SK-N-SH (cell line): ENCODE measurements at regions of chr5 and their contacts with region 1.

Region 1: DNA sequence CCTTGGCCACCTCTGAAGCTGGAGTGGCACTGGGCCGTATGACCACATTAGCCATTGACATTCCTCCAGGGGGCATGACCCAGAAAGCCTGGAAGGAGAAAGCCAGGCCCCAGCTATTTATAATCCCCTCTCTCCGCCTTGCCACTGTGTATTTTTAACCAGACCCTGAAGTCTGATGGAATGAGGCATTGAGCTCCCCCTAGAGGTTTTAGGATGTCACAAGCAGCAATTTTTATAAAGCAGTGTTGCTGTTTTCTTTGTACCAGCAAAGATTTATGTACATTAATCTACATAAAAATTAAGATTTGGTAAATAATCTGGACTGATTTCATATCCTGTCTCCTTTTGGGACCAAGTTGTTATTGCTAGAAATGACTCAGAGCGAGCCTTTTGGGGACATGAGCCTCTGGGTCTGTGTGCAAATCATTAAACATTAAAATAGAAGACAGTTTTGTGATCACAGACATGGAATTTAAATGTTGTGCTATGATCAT is 127.1 kb downstream of the TRIO start:
- DNase-seq: peak; percentile 73
- H3K4me3 ChIP-seq: no peak overlapping the region; a peak in 1 of 4 replicates
- H3K27ac ChIP-seq: peak overlapping the region; percentile 72 to 96
- H3K4me1 ChIP-seq: peaks cover 46 to 49% of the 10 kb centered on the region in 2 experiments
- H3K27me3 ChIP-seq: no peaks in the 10 kb centered on the region
- CTCF ChIP-seq: peak; percentile 87
- EP300 ChIP-seq: 0 out of 4 replicates have a peak, but pooled peaks of 1 of the 2 experiments have one; percentile 20
- RAD21 ChIP-seq: peak; percentile 87

Region 2: GRCh38 chr5:13708432-13708831 is 561.8 kb before region 1 on chr5:
- CTCF ChIA-PET with region 1: no interaction called
- POLR2A ChIA-PET with region 1: no interaction called
- DNase-seq: no peak
- H3K4me3 ChIP-seq: no peak overlapping the region
- H3K27ac ChIP-seq: no peak overlapping the region
- H3K4me1 ChIP-seq: no peaks in the 10 kb centered on the region
- H3K27me3 ChIP-seq: peaks cover 13% of the 10 kb centered on the region; the same call in 1 of the 2 replicates
- CTCF ChIP-seq: no peak
- EP300 ChIP-seq: no peak
- RAD21 ChIP-seq: no peak

Region 3: DNA sequence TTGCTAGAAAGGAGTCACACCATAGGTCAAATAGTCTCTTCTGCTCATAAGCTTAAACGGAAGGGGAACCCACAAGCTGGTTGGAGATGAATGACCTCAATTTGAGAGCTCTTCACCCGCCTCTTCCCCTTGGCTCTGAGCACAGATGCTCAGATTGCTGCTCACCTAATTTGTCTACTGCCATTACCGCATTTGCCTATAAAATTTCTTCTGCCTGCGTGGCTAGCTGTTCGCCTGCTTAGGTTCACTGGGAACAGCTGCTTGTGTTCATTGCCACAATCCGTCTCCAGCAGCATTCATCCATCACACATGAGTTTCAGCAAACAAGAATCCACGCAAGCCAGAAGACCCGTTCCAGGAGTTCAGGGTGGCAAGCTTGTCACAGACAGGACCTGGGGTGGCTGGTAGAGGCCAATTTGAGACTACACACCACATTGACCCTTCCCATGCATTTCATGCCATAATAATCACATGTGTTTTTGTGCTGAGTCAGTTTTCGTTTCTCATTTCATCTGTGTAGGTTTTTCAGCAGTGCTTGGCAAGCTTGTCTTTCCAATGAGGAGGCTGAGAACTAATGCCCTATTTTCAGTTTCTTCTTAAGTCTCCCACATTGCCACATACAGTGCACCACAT is 275.5 kb before region 1 on chr5:
- CTCF ChIA-PET with region 1: interaction called, 11 read pairs
- POLR2A ChIA-PET with region 1: no interaction called
- DNase-seq: no peak
- H3K4me3 ChIP-seq: no peak overlapping the region
- H3K27ac ChIP-seq: no peak overlapping the region
- H3K4me1 ChIP-seq: no peaks in the 10 kb centered on the region
- H3K27me3 ChIP-seq: no peaks in the 10 kb centered on the region
- CTCF ChIP-seq: no peak
- EP300 ChIP-seq: no peak
- RAD21 ChIP-seq: no peak

Region 4: DNA sequence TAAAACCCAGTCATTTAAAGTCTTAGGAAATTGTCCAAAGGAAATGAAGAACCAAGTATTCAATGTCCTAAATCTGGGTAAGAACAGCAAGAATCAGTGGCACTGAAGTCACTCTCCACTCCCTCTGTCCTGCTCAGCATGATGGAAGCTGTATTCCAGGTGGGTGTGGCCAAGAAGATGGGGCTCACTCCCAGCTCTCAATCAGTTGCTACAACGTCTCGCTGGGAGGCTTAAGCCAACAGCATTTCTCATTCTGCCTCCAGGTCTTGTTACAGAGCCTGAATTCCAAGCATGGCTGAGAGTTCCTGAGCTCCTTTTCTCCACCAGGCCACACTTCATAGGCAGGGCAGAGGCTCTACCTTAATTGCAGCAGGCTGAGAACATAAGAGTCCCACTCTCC is 168.3 kb before region 1 on chr5:
- CTCF ChIA-PET with region 1: interaction called, 16 read pairs
- POLR2A ChIA-PET with region 1: no interaction called
- DNase-seq: no peak
- H3K4me3 ChIP-seq: no peak overlapping the region
- H3K27ac ChIP-seq: peak overlapping the region in 1 of 2 experiments; percentile 26; a peak in 2 of 4 replicates
- H3K4me1 ChIP-seq: peaks cover 0 to 18% of the 10 kb centered on the region in 2 experiments; a peak in 1 of 4 replicates
- H3K27me3 ChIP-seq: no peaks in the 10 kb centered on the region
- CTCF ChIP-seq: no peak
- EP300 ChIP-seq: no peak
- RAD21 ChIP-seq: no peak

Region 5: DNA sequence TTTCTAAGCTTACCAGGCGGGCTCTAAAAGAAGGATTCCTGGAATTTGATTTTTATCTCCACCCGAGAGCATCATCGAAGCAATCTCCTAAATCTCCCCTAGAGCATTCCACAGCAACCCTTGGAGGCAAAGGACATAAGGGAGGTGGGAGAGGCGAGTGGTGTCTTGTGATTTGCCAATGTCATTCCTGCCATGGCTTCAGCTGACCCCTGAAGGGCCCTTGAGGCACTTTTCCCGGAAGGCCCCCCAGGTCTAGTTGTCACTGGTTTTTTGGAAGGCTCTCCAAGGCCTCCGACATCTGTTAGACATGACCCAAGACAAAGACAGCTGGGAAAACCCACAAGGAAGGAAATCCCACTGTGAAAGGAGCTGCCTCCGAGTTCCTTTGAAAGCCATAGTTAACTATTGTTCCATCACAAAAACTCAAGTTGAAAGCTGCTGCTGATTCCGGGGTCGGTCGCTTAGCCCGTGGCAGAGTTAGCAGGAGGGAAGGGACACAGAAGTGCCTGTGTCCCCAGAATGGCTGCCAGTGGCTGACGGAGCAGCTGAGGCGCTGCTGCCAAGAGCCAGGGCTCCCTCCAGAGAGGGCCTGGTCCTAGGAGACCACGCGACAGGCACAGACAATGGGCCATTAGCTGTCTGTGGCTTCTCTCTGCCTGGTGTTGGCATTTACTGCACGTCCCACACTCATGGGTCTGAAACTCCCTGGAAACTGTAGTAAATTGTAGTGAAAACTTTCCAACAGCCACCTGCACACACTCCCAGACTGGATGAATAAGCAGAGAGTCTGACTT is 151.5 kb before region 1 on chr5:
- CTCF ChIA-PET with region 1: interaction called, 14 read pairs
- POLR2A ChIA-PET with region 1: no interaction called
- DNase-seq: no peak
- H3K4me3 ChIP-seq: no peak overlapping the region
- H3K27ac ChIP-seq: no peak overlapping the region
- H3K4me1 ChIP-seq: peaks cover 0 to 8% of the 10 kb centered on the region in 2 experiments; a peak in 1 of 4 replicates
- H3K27me3 ChIP-seq: no peaks in the 10 kb centered on the region
- CTCF ChIP-seq: no peak
- EP300 ChIP-seq: no peak
- RAD21 ChIP-seq: no peak

Region 6: DNA sequence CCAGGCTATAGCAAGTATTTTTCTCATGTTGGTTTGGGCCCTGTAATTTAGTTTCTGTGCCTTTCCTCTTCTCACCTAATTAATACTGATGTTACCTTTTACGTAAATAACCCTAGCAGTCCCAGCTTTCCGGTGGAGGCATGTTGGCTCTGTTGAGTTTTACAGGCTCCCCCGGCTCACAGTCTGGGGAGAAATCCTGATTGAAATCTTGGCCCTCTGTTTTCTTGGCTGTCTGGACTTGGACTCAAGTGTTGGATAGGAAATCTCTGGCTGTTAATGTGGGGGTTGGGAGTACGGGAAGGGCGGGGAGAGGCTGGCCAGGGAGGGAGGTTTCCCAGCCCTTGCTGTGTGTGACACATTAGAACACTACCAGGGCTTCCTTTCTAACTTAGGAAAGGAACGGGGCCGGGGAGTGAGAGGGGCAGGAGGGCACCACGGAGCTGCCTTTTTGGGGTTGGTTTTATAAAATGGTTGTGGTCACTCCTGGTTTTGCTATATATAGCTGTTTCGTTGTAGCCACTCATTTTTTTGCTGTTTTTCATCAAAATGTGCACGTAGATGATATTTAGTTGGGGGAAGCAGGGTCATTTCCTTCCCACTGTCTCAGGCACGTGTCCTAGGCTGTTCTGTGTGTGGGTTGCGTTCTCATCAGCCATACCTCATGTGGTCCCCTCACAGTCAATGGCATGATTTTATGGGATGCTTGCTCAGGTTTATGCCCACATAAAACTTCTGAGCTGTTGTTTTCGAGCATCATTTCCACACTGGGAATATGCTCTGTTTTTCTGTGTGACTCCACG is 116.1 kb before region 1 on chr5:
- CTCF ChIA-PET with region 1: interaction called, 12 read pairs
- POLR2A ChIA-PET with region 1: no interaction called
- DNase-seq: no peak
- H3K4me3 ChIP-seq: peak overlapping the region in 1 of 2 experiments; percentile 31; a peak in 2 of 4 replicates
- H3K27ac ChIP-seq: peak overlapping the region; percentile 66 to 91; a peak in 3 of 4 replicates
- H3K4me1 ChIP-seq: peaks cover 53 to 65% of the 10 kb centered on the region in 2 experiments
- H3K27me3 ChIP-seq: no peaks in the 10 kb centered on the region
- CTCF ChIP-seq: no peak
- EP300 ChIP-seq: peak in 1 of 2 experiments; percentile 24; a peak in 1 of 4 replicates
- RAD21 ChIP-seq: no peak

Region 7: GRCh38 chr5:14281746-14282181 is 11.5 kb after region 1 on chr5:
- CTCF ChIA-PET with region 1: interaction called, 39 read pairs
- POLR2A ChIA-PET with region 1: no interaction called
- DNase-seq: no peak
- H3K4me3 ChIP-seq: no peak overlapping the region
- H3K27ac ChIP-seq: 0 out of 4 replicates have a peak overlapping the region, but pooled peaks of 1 of the 2 experiments have one; percentile 0
- H3K4me1 ChIP-seq: peaks cover 2 to 12% of the 10 kb centered on the region in 2 experiments; a peak in 2 of 4 replicates
- H3K27me3 ChIP-seq: no peaks in the 10 kb centered on the region
- CTCF ChIP-seq: no peak
- EP300 ChIP-seq: no peak
- RAD21 ChIP-seq: no peak